ENCODE measurements at regions of chr15 and their contacts with region 1.

Region 1: GRCh38 chr15:74768771-74769342 is 13.0 kb upstream of the CSK start:
- DNase-seq: no peak
- ATAC-seq: peak; percentile 53
- H3K4me3 Mint-ChIP-seq: no peak overlapping the region
- H3K27ac Mint-ChIP-seq: no peak overlapping the region
- H3K4me1 Mint-ChIP-seq: peaks cover 37% of the 10 kb centered on the region
- H3K27me3 Mint-ChIP-seq: no peaks in the 10 kb centered on the region
- CTCF ChIP-seq: peak; percentile 53

Region 2: DNA sequence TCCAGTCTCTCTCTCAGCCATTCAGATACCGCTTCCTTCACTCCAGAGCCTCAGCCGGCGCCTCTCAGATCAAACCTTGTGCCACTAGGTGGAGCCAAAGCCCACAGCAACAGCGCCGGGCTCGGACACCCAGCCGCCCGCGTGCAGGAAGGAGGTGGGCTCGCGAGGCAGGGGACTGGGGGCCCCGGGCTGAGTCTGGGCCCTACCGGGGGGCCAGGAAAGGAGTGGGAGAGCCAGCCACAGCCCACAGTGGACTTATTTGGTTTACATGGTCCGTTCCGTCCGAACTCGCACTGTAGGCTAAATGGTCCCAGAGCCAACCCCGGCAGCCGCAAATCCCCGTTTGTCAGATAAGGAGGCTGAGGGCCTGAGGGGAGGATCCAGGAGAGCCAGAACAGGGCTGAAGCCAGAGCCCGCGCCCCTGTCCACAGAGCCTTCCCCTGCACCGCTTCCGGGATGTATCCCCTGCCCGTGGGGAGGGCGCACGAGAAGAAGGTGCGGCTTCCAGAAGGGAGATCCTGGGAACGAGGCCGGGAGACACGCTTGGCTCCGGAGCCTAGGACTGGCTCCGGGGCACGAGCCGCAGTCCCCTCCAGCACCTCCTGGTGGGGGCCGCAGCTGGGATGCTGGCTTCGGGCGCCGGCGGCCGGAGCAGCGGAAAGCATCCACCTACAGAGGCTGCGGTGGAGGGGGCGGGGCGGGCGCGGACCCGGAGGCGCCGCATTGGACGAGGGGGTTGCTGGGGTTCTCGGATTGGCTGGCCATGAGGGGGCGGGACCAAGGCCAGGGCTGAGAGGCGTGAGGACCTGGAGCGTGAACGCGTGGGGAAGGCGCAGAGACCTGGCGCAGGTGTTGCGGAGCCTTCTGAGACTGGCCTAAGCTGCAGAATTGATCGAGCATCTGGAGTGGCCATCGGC is 394.9 kb before region 1 on chr15:
- CTCF ChIA-PET with region 1: interaction called, 7 read pairs
- POLR2A ChIA-PET with region 1: interaction called, 8 read pairs
- intact Hi-C with region 1: loop called (anchors 1 kb)
- DNase-seq: peak; percentile 89
- ATAC-seq: peak; percentile 94
- H3K4me3 Mint-ChIP-seq: peak overlapping the region; percentile 81
- H3K27ac Mint-ChIP-seq: peak overlapping the region; percentile 12
- H3K4me1 Mint-ChIP-seq: peaks cover 29% of the 10 kb centered on the region
- H3K27me3 Mint-ChIP-seq: peaks cover 9% of the 10 kb centered on the region
- CTCF ChIP-seq: peak; percentile 32

Region 3: GRCh38 chr15:74695597-74696397 is 73.1 kb before region 1 on chr15 and contains the start of gene EDC3:
- CTCF ChIA-PET with region 1: no interaction called
- POLR2A ChIA-PET with region 1: no interaction called
- intact Hi-C with region 1: loop called (anchors 10 kb)
- DNase-seq: peak; percentile 80
- ATAC-seq: peak; percentile 93
- H3K4me3 Mint-ChIP-seq: peak within 1 kb of the TSS; percentile 99
- H3K27ac Mint-ChIP-seq: peak within 1 kb of the TSS; percentile 91
- H3K4me1 Mint-ChIP-seq: peaks cover 39% of the 10 kb centered on the region
- H3K27me3 Mint-ChIP-seq: no peaks in the 10 kb centered on the region
- CTCF ChIP-seq: no peak
- total RNA-seq, gene EDC3: 44.8 and 49.5 TPM in 2 replicates

Region 4: GRCh38 chr15:74793135-74794028 is 24.5 kb after region 1 on chr15:
- CTCF ChIA-PET with region 1: interaction called, 1,146 read pairs
- POLR2A ChIA-PET with region 1: interaction called, 2,569 read pairs
- intact Hi-C with region 1: loop called (anchors 1 kb)
- DNase-seq: no peak
- ATAC-seq: no peak
- H3K4me3 Mint-ChIP-seq: peak overlapping the region; percentile 70
- H3K27ac Mint-ChIP-seq: peak overlapping the region; percentile 99
- H3K4me1 Mint-ChIP-seq: peaks cover 96% of the 10 kb centered on the region
- H3K27me3 Mint-ChIP-seq: no peaks in the 10 kb centered on the region
- CTCF ChIP-seq: no peak

Region 5: GRCh38 chr15:74842581-74843444 is 74.0 kb after region 1 on chr15 and contains the start of gene ULK3:
- CTCF ChIA-PET with region 1: interaction called, 8 read pairs
- POLR2A ChIA-PET with region 1: interaction called, 4 read pairs
- intact Hi-C with region 1: loop called (anchors 1 kb)
- DNase-seq: peak; percentile 97
- ATAC-seq: peak; percentile 95
- H3K4me3 Mint-ChIP-seq: peak within 1 kb of the TSS; percentile 91
- H3K27ac Mint-ChIP-seq: peak within 1 kb of the TSS; percentile 77
- H3K4me1 Mint-ChIP-seq: peaks cover 48% of the 10 kb centered on the region
- H3K27me3 Mint-ChIP-seq: no peaks in the 10 kb centered on the region
- CTCF ChIP-seq: no peak
- total RNA-seq, gene ULK3: 43.6 and 52.1 TPM in 2 replicates

Region 6: GRCh38 chr15:74950078-74951000 is 181.5 kb after region 1 on chr15:
- CTCF ChIA-PET with region 1: interaction called, 63 read pairs
- POLR2A ChIA-PET with region 1: interaction called, 8 read pairs
- intact Hi-C with region 1: loop called (anchors 1 kb)
- DNase-seq: peak; percentile 54
- ATAC-seq: peak; percentile 99
- H3K4me3 Mint-ChIP-seq: no peak overlapping the region
- H3K27ac Mint-ChIP-seq: no peak overlapping the region
- H3K4me1 Mint-ChIP-seq: peaks cover 4% of the 10 kb centered on the region
- H3K27me3 Mint-ChIP-seq: no peaks in the 10 kb centered on the region
- CTCF ChIP-seq: peak; percentile 24